Aorta (tissue), 5 donors: ENCODE measurements at regions of chr1 and their contacts with region 1.

Region 1: GRCh38 chr1:117534995-117535467 is 70.8 kb upstream of the TENT5C start:
- DNase-seq: no peak
- ATAC-seq: peak; percentile 90
- H3K4me3 ChIP-seq: no peak overlapping the region
- H3K27ac ChIP-seq: no peak overlapping the region
- H3K4me1 ChIP-seq: peaks cover 0 to 3% of the 10 kb centered on the region in 2 donors
- H3K27me3 ChIP-seq: no peaks in the 10 kb centered on the region

Region 2: DNA sequence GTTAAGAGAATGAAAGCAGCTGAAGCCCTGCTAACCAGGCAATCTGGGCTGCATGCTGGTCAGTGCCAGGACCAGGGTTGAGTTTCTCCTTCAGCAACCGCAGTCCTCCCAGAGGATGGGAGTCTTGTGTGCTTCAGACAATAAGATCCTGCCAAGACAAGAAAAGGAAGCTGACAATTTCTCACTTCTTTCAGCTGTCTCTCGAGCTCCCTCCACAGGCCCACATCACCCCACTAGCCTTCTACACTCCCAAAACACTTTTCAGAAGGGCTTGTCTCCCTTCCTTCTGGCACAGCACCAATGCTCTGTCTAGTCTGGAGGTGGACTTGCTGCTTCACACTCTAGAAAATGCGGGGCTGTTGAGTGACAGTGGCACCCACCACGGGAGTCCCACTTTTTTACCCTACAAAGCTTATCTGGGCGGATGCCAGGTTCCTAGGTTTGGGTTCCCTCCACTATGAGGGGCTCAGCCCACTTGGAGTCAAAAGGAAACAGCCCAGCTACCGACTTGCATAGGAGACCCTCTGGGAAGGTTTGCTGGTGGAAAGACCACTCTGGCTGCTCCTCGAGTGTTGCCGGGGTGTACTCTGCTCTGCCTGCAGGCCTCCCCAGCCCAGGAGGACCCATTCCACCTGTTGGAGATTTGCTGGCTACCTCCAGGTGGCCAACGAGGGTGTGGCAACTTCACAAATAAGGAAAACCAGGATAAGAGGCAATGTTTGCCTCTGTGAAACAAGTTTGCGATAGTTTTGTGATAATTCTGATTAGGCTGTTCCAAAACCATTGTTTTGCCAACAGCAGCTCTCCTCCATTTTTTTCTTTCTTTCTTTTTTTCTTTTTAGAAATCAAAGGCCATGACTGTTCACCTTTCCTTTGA is 139.7 kb after region 1 on chr1:
- intact Hi-C with region 1: loop called in 1 of 2 experiments (anchors 10 kb)
- DNase-seq: peak in 1 of 2 donors; percentile 57
- ATAC-seq: no peak
- H3K4me3 ChIP-seq: no peak overlapping the region
- H3K27ac ChIP-seq: peak overlapping the region in 1 of 2 donors; percentile 7
- H3K4me1 ChIP-seq: peaks cover 5 to 10% of the 10 kb centered on the region in 2 donors
- H3K27me3 ChIP-seq: no peaks in the 10 kb centered on the region

Region 3: GRCh38 chr1:117751321-117751720 is 216.3 kb after region 1 on chr1:
- intact Hi-C with region 1: loop called (anchors 2 to 5 kb)
- DNase-seq: no peak
- ATAC-seq: no peak
- H3K4me3 ChIP-seq: no peak overlapping the region
- H3K27ac ChIP-seq: no peak overlapping the region
- H3K4me1 ChIP-seq: peaks cover 0 to 5% of the 10 kb centered on the region in 2 donors
- H3K27me3 ChIP-seq: no peaks in the 10 kb centered on the region

Region 4: GRCh38 chr1:117886101-117886795 is 351.2 kb after region 1 on chr1:
- intact Hi-C with region 1: loop called in 1 of 2 experiments (anchors 10 kb)
- DNase-seq: no peak
- ATAC-seq: no peak
- H3K4me3 ChIP-seq: no peak overlapping the region
- H3K27ac ChIP-seq: no peak overlapping the region
- H3K4me1 ChIP-seq: no peaks in the 10 kb centered on the region
- H3K27me3 ChIP-seq: no peaks in the 10 kb centered on the region